Mammary epithelial cell (primary cell): ENCODE measurements at regions of chr5 and their contacts with region 1.

Region 1: DNA sequence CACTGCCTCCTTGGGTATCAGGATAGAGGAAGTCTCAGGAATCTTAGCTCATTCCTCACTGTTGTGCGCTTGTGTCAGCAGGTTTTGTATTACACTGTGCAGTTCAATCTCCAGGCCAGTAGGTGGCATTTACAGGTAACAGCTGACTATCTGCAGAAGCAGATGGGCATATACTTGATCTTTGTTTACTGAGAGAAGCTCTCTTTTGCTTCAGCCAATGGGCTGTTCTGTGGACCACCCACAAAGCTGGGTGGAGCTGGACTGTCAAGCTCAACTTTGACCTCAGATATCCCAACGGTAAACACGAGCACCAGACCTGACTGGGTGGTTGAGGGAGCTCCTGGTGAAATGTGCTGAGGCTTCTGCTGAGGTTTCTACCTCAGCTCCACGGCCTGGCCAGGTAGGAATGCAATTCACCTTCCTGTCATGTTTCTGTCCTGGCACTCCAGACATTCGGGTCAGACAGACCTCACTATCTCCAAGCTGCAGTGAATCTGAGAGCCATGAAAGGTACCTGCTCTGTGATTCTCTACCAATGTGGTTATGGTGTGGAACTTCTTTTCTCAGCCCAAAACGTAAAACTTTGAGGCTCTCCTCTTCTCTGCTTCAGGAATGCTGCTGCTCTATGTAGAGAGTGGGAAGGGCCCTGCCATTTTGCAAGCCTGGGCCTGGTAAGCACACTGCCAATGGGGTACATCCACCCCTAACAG is 167.9 kb upstream of the ACTBL2 start:
- DNase-seq: peak; percentile 74
- H3K4me3 ChIP-seq: no peak overlapping the region
- H3K27ac ChIP-seq: no peak overlapping the region
- H3K4me1 ChIP-seq: peaks cover 5% of the 10 kb centered on the region
- H3K27me3 ChIP-seq: no peaks in the 10 kb centered on the region
- CTCF ChIP-seq: peak; percentile 91 to 93

Region 2: DNA sequence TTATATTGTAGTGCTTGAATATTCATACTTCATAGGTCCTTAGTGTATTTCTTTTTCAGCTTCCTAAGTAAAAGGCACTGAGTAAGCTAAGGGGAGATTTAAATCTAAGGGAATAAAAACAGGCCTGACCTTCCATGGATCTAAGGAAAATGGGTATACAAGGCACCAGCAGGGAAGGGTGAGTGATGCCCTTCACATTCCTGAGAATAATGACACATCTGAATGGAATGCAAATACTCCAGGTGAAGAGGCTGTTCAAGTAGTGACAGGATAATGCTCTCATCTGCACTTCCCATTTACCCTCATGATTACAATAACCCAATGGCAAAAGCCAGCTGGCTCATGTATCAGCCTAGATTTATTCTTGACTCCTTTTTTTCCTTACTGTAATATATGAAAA is 48.3 kb after region 1 on chr5:
- CTCF ChIA-PET with region 1: no interaction called
- dilution Hi-C with region 1: no loop called
- in situ Hi-C with region 1: no loop called
- intact Hi-C with region 1: loop called (anchors 5 kb)
- DNase-seq: peak; percentile 92
- H3K4me3 ChIP-seq: no peak overlapping the region
- H3K27ac ChIP-seq: peak overlapping the region; percentile 75
- H3K4me1 ChIP-seq: peaks cover 44% of the 10 kb centered on the region
- H3K27me3 ChIP-seq: no peaks in the 10 kb centered on the region
- CTCF ChIP-seq: no peak

Region 3: DNA sequence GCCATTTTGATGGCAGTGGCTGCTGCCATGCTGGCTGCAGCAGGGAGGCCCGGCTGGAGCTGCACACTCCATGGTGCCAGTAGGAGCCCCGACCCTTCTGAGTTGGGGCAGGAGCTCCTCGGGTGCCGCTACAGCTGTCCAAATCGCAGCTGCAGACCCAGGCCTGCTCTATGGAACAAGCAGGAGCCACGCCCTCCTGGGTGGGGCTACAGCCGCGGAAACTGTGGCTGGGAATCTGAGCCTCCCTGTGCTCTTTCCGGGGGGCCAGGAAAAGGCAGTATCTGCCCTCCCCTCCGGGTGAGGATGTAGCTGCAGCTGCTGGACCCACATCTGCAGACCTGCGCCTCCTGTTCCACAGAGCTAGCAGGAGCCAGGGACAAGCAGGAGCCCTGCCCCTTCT is 111.0 kb after region 1 on chr5:
- CTCF ChIA-PET with region 1: interaction called, 5 read pairs
- dilution Hi-C with region 1: no loop called
- in situ Hi-C with region 1: loop called (anchors 10 to 25 kb)
- intact Hi-C with region 1: no loop called
- DNase-seq: no peak
- H3K4me3 ChIP-seq: no peak overlapping the region
- H3K27ac ChIP-seq: no peak overlapping the region
- H3K4me1 ChIP-seq: peaks cover 4% of the 10 kb centered on the region
- H3K27me3 ChIP-seq: no peaks in the 10 kb centered on the region
- CTCF ChIP-seq: no peak